Posterior cingulate gyrus (tissue), 11 donors: ENCODE measurements at regions of chr5 and their contacts with region 1.

Region 1: DNA sequence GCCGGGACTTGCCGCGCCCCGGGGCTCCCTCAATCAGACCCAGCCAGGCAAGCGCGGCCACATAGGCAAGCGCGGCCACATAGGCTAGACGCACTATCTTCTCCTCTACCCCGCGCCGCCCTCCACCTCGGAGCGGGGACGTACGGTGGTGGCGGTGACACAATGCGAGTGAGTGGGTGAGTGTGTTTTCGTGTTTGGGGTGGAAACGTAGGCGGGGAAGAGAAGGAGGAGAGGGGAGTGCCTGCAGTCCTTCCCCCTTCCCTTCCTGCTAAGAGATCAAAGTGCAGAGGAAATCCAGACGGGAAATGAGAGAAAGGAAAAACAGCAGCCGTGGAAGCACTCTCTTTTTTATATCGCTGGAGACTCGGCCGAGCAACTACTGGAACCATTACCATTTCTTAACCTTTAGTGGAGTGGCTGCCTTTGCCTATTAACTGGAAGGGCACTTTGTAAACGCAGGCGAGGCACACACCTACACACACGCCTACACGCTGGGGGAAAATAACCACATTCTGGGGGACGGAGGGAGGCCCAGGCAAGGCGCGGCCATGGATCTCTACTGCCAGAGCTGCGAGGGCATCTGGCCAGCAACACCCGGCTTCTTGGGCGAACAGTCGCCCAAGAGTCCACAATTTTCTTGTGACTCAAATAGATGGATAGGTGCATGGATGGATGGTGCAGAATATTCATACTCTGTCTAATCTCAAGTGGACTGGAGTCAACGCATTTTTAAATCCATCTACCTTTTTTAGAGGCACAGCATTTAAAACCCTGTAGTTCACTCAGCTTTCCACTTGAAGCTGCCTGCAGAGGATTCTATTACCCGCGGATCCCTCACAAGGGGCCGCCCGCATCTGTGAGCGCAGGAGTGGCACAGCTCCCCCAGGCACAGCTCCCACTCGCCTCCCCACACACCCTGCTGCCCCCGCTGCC is 2.1 kb downstream of the EDIL3 start:
- DNase-seq: peak; percentile 43 to 94 (median 64)

Region 2: DNA sequence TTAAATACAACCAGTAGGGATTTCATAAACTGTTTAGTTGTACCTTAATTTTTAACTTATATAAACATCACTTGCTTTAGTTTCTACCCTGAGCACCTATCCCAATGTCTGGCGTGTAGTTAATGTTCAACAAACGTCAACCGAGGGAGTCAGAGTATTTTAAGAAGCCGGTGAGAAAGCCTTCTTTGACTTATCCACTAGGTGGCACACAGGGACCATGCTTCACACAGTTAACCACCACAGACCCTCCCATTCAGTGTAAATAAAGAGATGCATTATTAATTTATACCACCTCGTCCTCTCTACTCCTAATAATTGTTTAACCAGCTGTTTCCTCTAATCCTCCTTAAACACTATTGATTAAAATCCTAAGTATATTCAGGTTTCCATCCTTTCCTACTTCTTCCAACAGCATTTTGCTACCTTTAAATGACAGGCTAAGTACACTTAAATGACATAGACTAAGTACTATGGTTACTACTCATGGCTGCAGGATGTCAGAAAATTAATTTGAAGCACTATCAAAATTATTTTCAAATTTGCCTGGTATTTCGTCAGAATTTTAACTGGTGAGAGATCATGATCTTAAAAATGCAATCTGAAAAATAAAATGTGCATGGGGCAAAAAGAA is 664.3 kb before region 1 on chr5:
- intact Hi-C with region 1: loop called (anchors 5 kb)
- DNase-seq: peak in 5 of 10 donors; percentile 18 to 66 (median 38)

Region 3: GRCh38 chr5:83927140-83927733 is 455.4 kb before region 1 on chr5:
- intact Hi-C with region 1: loop called (anchors 2 kb)
- DNase-seq: peak; percentile 30 to 93 (median 78)

Region 4: GRCh38 chr5:84274585-84275468 is 107.8 kb before region 1 on chr5:
- intact Hi-C with region 1: loop called (anchors 10 kb)
- DNase-seq: peak in 3 of 10 donors; percentile 27 to 53 (median 49)

Region 5: GRCh38 chr5:84290161-84290560 is 92.5 kb before region 1 on chr5:
- intact Hi-C with region 1: loop called (anchors 5 kb)
- DNase-seq: peak in 1 of 10 donors; percentile 71

Region 6: DNA sequence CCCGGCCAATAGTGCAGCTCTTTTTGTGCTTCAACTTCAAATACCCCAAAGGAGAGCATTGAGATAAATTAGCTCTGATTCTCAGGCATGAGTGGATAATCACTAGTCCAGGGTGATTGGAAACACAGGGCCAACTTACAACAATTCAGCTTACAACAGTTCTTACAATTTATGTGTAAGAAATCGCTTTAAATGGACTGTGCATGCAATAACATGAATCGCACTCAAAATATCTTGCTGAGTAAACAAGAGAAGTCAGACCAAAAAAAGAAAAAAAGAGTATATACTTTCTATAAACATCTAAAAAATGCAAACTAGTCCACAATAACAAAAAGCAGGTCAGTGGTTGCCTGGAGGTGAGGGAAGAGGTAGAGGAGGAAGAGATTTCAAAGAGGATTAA is 152.7 kb after region 1 on chr5:
- intact Hi-C with region 1: no loop called
- DNase-seq: no peak

Region 7: GRCh38 chr5:84573017-84573712 is 190.5 kb after region 1 on chr5:
- intact Hi-C with region 1: loop called (anchors 5 kb)
- DNase-seq: no peak

Region 8: GRCh38 chr5:84585218-84585617 is 202.6 kb after region 1 on chr5:
- intact Hi-C with region 1: no loop called
- DNase-seq: no peak